ENCODE measurements at regions of chr1 and their contacts with region 1.

Region 1: DNA sequence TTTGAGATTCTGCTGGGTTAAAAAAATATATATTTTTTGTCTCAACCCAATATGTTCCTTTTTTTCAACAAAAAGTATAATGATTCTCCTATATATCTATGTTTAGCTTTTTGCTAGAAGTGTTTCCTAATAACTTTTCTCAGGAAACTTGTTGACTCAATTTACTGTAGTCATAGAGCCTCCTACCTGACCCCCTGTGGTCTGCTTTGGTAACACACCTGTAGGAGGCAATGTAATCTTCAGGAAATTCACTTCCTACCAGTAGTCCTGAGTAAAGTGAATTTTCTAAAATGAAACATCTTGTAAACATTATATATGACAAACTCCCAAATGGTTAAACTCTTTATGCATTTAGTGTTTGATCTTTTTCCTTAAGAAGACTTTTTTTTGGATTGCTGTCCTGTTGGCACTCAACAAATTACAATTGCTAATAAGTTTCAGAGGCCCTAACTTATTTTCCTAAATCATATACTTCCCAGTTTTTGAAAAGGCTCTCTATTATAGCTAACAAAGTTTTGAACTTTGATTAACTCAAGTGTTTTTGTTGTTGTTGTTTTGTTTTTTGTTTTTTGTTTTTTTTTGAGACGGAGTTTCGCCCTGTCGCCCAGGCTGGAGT is 118.3 kb downstream of the OLFML2B start:
- DNase-seq: no peak
- H3K4me3 ChIP-seq: no peak overlapping the region
- H3K27ac ChIP-seq: no peak overlapping the region
- H3K4me1 ChIP-seq: no peaks in the 10 kb centered on the region
- H3K27me3 ChIP-seq: no peaks in the 10 kb centered on the region
- CTCF ChIP-seq: peak in 2 of 3 experiments; percentile 55 to 58; a peak in 3 of 4 replicates
- EP300 ChIP-seq: no peak
- POLR2A ChIP-seq: no peak
- RAD21 ChIP-seq: peak; percentile 41 to 55

Region 2: GRCh38 chr1:161885003-161885402 is 20.4 kb before region 1 on chr1:
- CTCF ChIA-PET with region 1: interaction called, 12 read pairs
- POLR2A ChIA-PET with region 1: no interaction called
- DNase-seq: no peak
- H3K4me3 ChIP-seq: no peak overlapping the region
- H3K27ac ChIP-seq: no peak overlapping the region
- H3K4me1 ChIP-seq: no peaks in the 10 kb centered on the region
- H3K27me3 ChIP-seq: no peaks in the 10 kb centered on the region
- CTCF ChIP-seq: no peak
- EP300 ChIP-seq: no peak
- POLR2A ChIP-seq: no peak
- RAD21 ChIP-seq: no peak

Measured in H1 (cell line).